ENCODE measurements at regions of chr17 and their contacts with region 1.

Region 1: GRCh38 chr17:64025732-64026294 is 5.4 kb upstream of the ICAM2 start:
- DNase-seq: no peak
- H3K4me3 ChIP-seq: no peak overlapping the region
- H3K27me3 ChIP-seq: no peaks in the 10 kb centered on the region
- CTCF ChIP-seq: peak; percentile 96

Region 2: GRCh38 chr17:63641692-63642448 is 383.9 kb before region 1 on chr17:
- CTCF ChIA-PET with region 1: no interaction called
- POLR2A ChIA-PET with region 1: no interaction called
- DNase-seq: no peak
- H3K4me3 ChIP-seq: no peak overlapping the region
- H3K27me3 ChIP-seq: no peaks in the 10 kb centered on the region
- CTCF ChIP-seq: no peak

Region 3: DNA sequence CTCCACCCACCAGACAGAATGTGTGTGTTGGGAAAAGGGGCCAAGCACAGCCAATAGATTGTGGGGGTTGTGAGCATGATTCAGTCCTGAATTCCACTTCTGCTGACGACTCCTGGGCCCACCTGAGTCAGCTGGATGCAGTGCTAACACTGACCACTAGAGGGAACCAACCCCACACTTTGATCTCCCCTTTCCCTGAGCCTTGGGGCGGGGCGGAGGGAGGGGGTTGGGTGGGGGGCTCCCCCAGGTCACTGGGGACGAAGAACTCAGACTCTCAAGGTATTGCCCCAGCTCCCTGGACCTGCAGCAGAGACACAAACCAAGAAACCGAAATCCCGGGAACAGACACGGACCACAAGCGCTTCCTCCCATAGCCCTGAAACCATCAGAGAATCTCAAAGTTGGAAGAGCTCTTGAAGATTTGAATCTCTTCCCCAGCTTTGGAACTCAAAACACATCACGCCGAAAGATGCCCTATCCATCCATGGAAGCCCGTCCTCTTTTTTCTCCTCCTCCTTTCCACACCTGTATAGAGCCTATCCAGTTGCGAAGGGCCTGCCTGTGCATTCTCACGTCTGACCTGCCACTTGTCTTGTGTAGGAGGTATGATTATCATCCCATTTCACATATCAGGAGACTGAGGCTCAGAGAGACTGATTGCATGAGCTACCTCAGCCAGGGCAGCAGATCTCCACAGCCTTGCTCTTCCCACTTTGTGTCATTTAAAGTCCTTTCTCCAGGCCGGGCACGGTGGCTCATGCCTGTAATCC is 114.0 kb before region 1 on chr17:
- CTCF ChIA-PET with region 1: interaction called, 139 read pairs
- POLR2A ChIA-PET with region 1: no interaction called
- DNase-seq: no peak
- H3K4me3 ChIP-seq: no peak overlapping the region
- H3K27me3 ChIP-seq: peaks cover 10% of the 10 kb centered on the region
- CTCF ChIP-seq: peak; percentile 72

Region 4: DNA sequence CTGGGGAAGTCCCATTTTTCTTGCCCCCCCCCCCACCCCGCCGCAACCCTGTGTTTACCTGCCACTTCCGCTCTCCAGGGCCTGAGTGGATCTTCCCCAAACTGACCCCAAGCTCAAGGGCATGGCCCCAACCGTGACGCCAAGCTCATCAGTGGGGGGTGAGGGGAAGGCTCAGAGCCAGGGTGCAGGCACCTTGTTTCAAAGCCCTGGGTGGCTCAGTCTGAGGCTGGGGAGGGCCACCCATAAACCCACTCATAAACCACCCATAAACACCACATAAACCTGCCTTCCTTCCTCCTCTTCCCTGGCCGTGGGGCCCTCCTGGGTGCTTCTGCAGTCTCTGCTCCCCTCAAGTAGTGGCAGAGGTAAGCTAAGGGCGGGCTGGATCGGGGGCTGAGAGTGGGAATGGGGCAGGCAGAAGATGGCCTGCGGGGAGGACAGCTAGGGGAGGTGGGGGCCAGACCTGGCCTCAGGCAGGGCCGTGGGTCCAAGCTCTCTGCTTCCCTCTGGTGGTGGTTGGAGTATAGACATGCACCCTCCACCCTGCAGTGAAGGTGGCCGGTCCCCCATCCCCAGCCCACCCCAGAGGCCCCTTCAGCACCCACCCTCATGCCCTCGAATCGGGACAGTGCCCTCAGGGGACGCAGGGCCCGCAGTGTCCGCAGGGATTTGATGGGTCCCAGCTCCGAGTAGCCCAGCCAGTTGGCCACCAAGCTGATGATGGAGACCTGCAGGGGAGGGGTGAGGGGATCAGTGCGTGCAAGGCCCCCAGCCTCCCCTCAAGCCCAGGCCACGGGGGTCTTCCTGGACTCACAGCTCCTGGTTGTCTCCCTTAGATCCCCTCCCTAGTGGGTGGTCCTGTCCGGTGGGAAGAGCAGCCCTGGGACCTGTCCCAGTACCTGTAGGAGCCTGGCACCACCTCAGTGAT is 79.1 kb before region 1 on chr17:
- CTCF ChIA-PET with region 1: interaction called, 12 read pairs
- POLR2A ChIA-PET with region 1: no interaction called
- DNase-seq: no peak
- H3K4me3 ChIP-seq: no peak overlapping the region
- H3K27me3 ChIP-seq: peaks cover 1% of the 10 kb centered on the region; the same call in 1 of the 2 replicates
- CTCF ChIP-seq: peak; percentile 82

Region 5: GRCh38 chr17:64041912-64042311 is 16.1 kb after region 1 on chr17:
- CTCF ChIA-PET with region 1: interaction called, 19 read pairs
- POLR2A ChIA-PET with region 1: no interaction called
- DNase-seq: no peak
- H3K4me3 ChIP-seq: no peak overlapping the region
- H3K27me3 ChIP-seq: no peaks in the 10 kb centered on the region
- CTCF ChIP-seq: no peak

Region 6: GRCh38 chr17:64129764-64130558 is 104.1 kb after region 1 on chr17 and contains the start of gene ERN1:
- CTCF ChIA-PET with region 1: interaction called, 388 read pairs
- POLR2A ChIA-PET with region 1: interaction called, 5 read pairs
- DNase-seq: no peak
- H3K4me3 ChIP-seq: peak within 1 kb of the TSS; percentile 69
- H3K27me3 ChIP-seq: no peaks in the 10 kb centered on the region
- CTCF ChIP-seq: no peak
- polyA plus RNA-seq, gene ERN1: 8.5 and 8.6 TPM in 2 replicates

Region 7: DNA sequence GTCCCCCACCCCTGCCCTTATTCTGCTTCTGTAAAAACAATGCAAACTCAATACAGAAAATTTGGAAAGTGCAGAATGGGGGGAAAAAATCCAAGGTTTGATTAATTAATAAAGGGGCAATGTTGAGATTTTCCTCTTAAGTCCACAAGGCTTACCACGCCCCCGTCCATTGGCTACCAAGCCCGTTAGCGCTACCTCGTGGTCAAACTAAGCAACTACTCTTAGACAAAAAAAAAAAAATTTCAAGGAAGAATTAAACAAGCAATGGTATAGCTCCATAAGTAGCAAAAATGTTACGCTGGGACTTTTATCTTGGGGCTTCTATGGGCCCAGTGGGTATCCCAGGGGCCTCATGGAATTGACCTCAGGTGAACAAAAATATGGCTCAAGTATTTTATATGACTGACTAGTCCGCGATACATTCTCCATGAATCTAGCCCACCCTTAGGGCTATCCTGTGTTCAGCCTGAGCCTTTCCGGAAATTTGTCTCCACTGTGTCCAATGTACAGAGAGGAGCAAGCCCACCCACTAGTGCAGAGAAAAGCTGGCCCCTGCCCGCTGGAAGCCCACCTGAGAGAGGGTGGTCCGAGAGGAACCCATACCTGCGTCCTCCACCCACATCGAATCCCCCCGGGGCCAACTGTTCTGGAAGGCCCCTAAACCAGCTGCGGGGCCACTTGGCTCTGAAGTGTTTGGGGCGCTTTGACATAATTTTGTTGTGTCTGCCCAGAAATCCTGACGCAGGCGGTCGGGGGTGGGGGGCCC is 256.3 kb after region 1 on chr17:
- CTCF ChIA-PET with region 1: interaction called, 20 read pairs
- POLR2A ChIA-PET with region 1: no interaction called
- DNase-seq: no peak
- H3K4me3 ChIP-seq: no peak overlapping the region
- H3K27me3 ChIP-seq: no peaks in the 10 kb centered on the region
- CTCF ChIP-seq: peak; percentile 80